HCT116 (cell line): ENCODE measurements at regions of chr17 and their contacts with region 1.

Region 1: GRCh38 chr17:8173056-8173870 is 2.9 kb downstream of the TMEM107 start:
- DNase-seq: peak; percentile 99
- ATAC-seq: peak; percentile 78
- H3K4me3 ChIP-seq: peak overlapping the region; percentile 43 to 57
- H3K27ac ChIP-seq: peak overlapping the region; percentile 69
- H3K4me1 ChIP-seq: peaks cover 22 to 46% of the 10 kb centered on the region in 2 experiments
- H3K27me3 ChIP-seq: no peaks in the 10 kb centered on the region
- CTCF ChIP-seq: no peak
- POLR2A ChIP-seq: peak; percentile 100
- RAD21 ChIP-seq: no peak; the same call in 1 of the 2 replicates

Region 2: DNA sequence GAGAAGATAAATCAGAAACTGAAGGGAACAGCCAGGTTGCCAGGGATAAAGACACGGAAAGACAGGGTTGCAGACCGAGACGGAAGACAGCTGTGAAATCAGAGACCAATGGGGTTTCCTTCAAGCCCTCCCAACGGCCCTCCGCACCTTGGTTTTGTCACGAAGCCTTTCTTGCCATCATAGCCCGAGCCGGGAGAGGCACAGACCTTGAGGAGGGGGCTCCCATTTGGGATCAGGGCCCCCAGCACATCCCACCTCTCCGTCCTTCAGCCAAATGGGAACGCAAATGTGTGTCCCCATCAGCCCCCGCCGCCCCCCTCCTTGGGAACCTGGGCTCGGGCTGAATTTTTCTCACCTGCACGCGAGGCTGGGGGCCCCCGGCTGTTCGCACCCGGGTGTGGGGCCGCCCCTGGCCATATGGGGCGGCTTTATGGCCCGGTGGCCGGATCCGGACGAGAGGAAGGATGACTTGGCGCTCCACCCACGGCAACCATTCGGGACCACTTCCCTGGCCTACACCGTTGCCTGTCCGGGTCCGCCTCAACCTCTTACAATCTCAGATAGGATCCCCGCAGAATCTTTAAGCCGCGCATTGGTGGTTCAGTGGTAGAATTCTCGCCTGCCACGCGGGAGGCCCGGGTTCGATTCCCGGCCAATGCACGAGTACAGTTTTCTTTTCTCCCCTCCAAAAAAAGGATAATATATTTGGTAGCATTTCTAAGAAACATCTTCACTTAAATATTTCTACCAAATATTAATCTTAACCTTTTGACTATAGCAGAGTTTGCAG is 47.9 kb before region 1 on chr17:
- CTCF ChIA-PET with region 1: no interaction called
- POLR2A ChIA-PET with region 1: interaction called, 43 read pairs
- RAD21 ChIA-PET with region 1: no interaction called
- intact Hi-C with region 1: no loop called
- DNase-seq: peak; percentile 60
- ATAC-seq: peak; percentile 18
- H3K4me3 ChIP-seq: peak overlapping the region; percentile 44 to 57
- H3K27ac ChIP-seq: peak overlapping the region; percentile 57; the same call in 1 of the 2 replicates
- H3K4me1 ChIP-seq: peaks cover 26 to 72% of the 10 kb centered on the region in 2 experiments
- H3K27me3 ChIP-seq: no peaks in the 10 kb centered on the region
- CTCF ChIP-seq: no peak
- POLR2A ChIP-seq: no peak
- RAD21 ChIP-seq: no peak

Region 3: DNA sequence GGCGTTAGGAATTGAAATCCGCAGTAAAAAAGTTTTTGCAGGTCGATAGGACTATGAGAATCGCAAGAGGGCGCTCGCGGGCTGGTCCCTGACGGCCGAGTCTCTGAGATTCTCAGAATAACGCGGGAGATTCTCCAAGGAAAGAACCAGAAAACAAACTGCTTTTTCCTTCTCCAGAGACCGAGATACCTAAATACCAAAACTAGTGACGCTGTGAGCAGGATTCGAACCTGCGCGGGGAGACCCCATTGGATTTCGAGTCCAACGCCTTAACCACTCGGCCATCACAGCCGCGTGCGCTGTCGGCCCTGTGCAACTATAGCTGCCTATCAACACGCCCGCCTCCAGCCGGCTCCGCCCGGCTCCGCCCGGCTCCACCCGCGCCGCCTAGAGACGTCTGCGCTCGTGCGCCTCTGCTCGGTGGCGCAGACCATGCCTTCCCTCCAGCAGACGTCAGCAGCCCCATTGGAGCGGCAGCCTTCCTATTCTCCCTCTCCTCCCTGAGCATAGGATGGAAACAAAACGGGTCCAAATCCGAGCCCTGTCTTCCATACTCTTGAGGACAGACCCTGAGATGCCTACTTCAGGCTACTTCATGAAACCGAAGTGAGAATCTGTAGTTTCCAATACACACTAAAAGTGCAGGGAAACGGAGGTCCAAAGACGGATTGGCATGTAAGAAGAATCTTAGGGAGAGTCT is 34.4 kb before region 1 on chr17:
- CTCF ChIA-PET with region 1: no interaction called
- POLR2A ChIA-PET with region 1: interaction called, 25 read pairs
- RAD21 ChIA-PET with region 1: no interaction called
- intact Hi-C with region 1: no loop called
- DNase-seq: peak; percentile 95
- ATAC-seq: peak; percentile 89
- H3K4me3 ChIP-seq: peak overlapping the region; percentile 14 to 48; a peak in 3 of 4 replicates
- H3K27ac ChIP-seq: peak overlapping the region; percentile 63
- H3K4me1 ChIP-seq: peaks cover 30 to 61% of the 10 kb centered on the region in 2 experiments
- H3K27me3 ChIP-seq: no peaks in the 10 kb centered on the region
- CTCF ChIP-seq: peak; percentile 86 to 87 (median 87)
- POLR2A ChIP-seq: no peak
- RAD21 ChIP-seq: peak; percentile 88

Region 4: GRCh38 chr17:8189711-8190477 is 16.6 kb after region 1 on chr17 and contains the start of gene BORCS6:
- CTCF ChIA-PET with region 1: no interaction called
- POLR2A ChIA-PET with region 1: interaction called, 60 read pairs
- RAD21 ChIA-PET with region 1: no interaction called
- intact Hi-C with region 1: no loop called
- DNase-seq: peak; percentile 96
- ATAC-seq: peak; percentile 64
- H3K4me3 ChIP-seq: peak within 1 kb of the TSS; percentile 75 to 83
- H3K27ac ChIP-seq: peak within 1 kb of the TSS; percentile 89
- H3K4me1 ChIP-seq: peaks cover 32 to 64% of the 10 kb centered on the region in 2 experiments
- H3K27me3 ChIP-seq: no peaks in the 10 kb centered on the region
- CTCF ChIP-seq: no peak
- POLR2A ChIP-seq: no peak
- RAD21 ChIP-seq: no peak
- total RNA-seq, gene BORCS6: 6.4 TPM

Region 5: GRCh38 chr17:8222630-8223356 is 49.5 kb after region 1 on chr17:
- CTCF ChIA-PET with region 1: no interaction called
- POLR2A ChIA-PET with region 1: interaction called, 45 read pairs
- RAD21 ChIA-PET with region 1: no interaction called
- intact Hi-C with region 1: no loop called
- DNase-seq: peak; percentile 87
- ATAC-seq: peak; percentile 47
- H3K4me3 ChIP-seq: peak overlapping the region; percentile 82 to 86
- H3K27ac ChIP-seq: peak overlapping the region; percentile 83
- H3K4me1 ChIP-seq: peaks cover 51 to 94% of the 10 kb centered on the region in 2 experiments
- H3K27me3 ChIP-seq: no peaks in the 10 kb centered on the region
- CTCF ChIP-seq: no peak
- POLR2A ChIP-seq: peak; percentile 44
- RAD21 ChIP-seq: no peak

Region 6: DNA sequence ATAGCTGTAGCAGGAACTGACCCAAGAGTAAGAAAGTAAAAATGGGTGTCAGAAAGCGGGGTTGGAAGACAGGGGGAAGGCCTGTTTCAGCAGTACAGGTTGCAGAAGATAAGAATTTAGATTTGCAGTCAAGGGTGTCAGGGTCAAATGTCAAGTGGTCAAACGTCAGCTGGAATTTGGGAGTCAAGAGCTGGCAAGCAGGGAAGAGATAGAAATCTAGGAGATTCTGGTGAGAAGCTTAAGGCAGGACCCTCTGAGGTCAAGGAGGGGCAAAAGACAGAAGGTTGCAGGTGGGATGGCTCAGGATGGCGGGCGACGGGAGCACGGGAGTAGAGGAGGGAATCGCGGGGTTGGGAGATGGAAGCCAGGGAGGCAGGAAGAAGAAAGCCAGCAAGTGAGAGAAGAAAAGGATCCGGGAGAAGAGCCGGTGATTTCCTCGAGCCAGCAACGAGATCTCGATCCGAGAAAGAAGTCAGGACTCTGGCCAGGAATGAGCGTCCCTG is 121.6 kb after region 1 on chr17:
- CTCF ChIA-PET with region 1: no interaction called
- POLR2A ChIA-PET with region 1: interaction called, 14 read pairs
- RAD21 ChIA-PET with region 1: no interaction called
- intact Hi-C with region 1: no loop called
- DNase-seq: no peak
- ATAC-seq: peak; percentile 24
- H3K4me3 ChIP-seq: peak overlapping the region; percentile 54 to 65
- H3K27ac ChIP-seq: peak overlapping the region; percentile 93
- H3K4me1 ChIP-seq: peaks cover 19 to 34% of the 10 kb centered on the region in 2 experiments
- H3K27me3 ChIP-seq: no peaks in the 10 kb centered on the region
- CTCF ChIP-seq: no peak
- POLR2A ChIP-seq: no peak
- RAD21 ChIP-seq: no peak

Region 7: DNA sequence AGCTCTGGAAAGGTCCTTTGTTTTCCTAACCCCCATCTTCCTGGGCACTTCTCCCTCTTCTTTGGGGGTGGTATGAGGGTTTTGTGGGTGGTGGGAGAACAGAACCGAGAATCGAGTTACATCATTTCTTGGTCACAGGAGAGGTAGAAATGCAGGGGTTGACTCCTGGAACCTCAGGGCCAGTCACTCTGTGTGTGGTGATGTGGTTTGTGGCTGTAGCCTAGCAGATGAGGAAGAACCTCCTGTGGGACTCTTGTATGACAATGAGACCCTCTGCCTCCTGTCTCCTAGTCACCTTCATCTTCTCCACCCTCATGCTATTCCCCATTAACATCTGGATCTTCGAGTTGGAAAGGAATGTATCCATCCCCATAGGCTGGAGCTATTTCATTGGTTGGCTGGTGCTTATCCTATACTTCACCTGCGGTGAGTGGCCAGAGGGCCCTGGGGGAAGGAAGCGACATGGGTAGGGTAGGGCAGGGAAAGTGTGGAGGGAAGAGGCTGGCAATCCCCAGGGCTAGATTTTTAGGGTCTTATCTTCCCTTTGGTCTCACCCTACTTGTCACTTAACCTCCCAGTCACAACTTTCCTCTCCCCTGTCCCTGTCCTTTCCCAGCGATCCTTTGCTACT is 171.9 kb after region 1 on chr17:
- CTCF ChIA-PET with region 1: no interaction called
- POLR2A ChIA-PET with region 1: no interaction called
- RAD21 ChIA-PET with region 1: no interaction called
- intact Hi-C with region 1: no loop called
- DNase-seq: no peak
- ATAC-seq: no peak
- H3K4me3 ChIP-seq: no peak overlapping the region
- H3K27ac ChIP-seq: no peak overlapping the region
- H3K4me1 ChIP-seq: no peaks in the 10 kb centered on the region
- H3K27me3 ChIP-seq: peaks cover 5% of the 10 kb centered on the region; the same call in 1 of the 2 replicates
- CTCF ChIP-seq: no peak
- POLR2A ChIP-seq: no peak
- RAD21 ChIP-seq: no peak